Activated CD8-positive, alpha-beta T cell treated with anti-CD3 and anti-CD28 coated beads for 36 hours (primary cell): ENCODE measurements at regions of chr11 and their contacts with region 1.

Region 1: DNA sequence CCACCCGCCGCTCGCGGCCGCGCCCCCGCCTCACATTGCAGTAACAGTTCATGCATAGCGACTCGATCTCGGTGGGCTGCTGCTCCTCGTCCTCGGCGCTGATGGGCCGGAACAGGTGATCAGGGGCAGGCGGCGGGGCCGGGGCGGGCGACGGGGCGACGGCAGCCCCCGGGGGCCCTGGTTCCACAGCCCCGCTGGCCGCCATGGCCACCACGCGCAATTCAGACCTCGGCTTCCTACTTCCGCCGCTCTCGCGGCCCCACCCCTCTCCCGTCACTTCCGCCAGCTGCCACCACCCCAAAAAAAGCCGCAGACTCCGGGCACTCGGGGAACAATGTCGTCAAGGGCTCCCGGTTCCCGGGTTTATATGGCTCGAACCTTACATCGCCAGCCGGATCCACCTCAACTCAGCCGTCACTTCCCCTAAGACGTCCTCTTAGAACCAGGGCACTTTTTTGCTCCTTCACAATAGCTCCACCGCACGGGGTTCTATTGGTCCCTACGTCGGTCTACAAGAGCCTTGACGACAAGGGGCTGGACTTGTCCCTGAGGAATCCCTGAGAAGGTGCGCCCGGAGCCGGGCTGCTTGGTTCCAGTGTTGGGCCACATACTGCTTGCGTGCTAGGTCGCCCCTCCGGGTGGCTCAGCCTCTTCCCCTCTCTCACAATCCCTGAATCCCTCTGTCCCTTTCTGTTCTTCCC is at the start of gene ZPR1:
- DNase-seq: peak; percentile 87
- ATAC-seq: peak; percentile 77
- H3K4me3 Mint-ChIP-seq: peak within 1 kb of the TSS; percentile 83
- H3K27ac Mint-ChIP-seq: peak within 1 kb of the TSS; percentile 91
- H3K4me1 Mint-ChIP-seq: peaks cover 44% of the 10 kb centered on the region
- H3K27me3 Mint-ChIP-seq: no peaks in the 10 kb centered on the region
- CTCF ChIP-seq: no peak
- total RNA-seq, gene ZPR1: 89.9 TPM

Region 2: DNA sequence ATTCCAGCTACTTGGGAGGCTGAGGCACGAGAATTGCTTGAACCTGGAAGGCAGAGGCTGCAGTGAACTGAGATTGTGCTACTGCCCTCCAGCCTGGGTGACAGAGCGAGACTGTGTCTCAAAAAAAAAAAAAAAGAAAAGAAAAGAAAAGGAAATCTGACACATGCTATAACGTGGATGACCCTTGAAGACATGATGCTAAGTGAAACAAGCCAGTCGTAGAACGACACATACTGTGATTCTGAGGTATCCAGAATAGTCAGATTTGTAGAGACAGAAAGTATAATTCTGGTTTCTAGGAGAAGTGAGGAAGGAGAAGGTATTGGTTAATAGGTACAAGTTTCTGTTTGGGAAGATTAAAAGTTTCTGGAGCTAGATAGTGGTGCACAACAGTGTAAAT is 10.4 kb after region 1 on chr11:
- CTCF ChIA-PET with region 1: interaction called, 17 read pairs
- POLR2A ChIA-PET with region 1: interaction called, 3 read pairs
- intact Hi-C with region 1: no loop called
- DNase-seq: no peak
- ATAC-seq: no peak
- H3K4me3 Mint-ChIP-seq: no peak overlapping the region
- H3K27ac Mint-ChIP-seq: no peak overlapping the region
- H3K4me1 Mint-ChIP-seq: no peaks in the 10 kb centered on the region
- H3K27me3 Mint-ChIP-seq: peaks cover 5% of the 10 kb centered on the region
- CTCF ChIP-seq: no peak

Region 3: GRCh38 chr11:116813781-116814471 is 26.0 kb after region 1 on chr11:
- CTCF ChIA-PET with region 1: interaction called, 13 read pairs
- POLR2A ChIA-PET with region 1: no interaction called
- intact Hi-C with region 1: no loop called
- DNase-seq: no peak
- ATAC-seq: no peak
- H3K4me3 Mint-ChIP-seq: no peak overlapping the region
- H3K27ac Mint-ChIP-seq: no peak overlapping the region
- H3K4me1 Mint-ChIP-seq: no peaks in the 10 kb centered on the region
- H3K27me3 Mint-ChIP-seq: peaks cover 2% of the 10 kb centered on the region
- CTCF ChIP-seq: no peak

Region 4: GRCh38 chr11:116853461-116854073 is 65.6 kb after region 1 on chr11:
- CTCF ChIA-PET with region 1: interaction called, 29 read pairs
- POLR2A ChIA-PET with region 1: interaction called, 7 read pairs
- intact Hi-C with region 1: no loop called
- DNase-seq: peak; percentile 74
- ATAC-seq: peak; percentile 94
- H3K4me3 Mint-ChIP-seq: peak overlapping the region; percentile 23
- H3K27ac Mint-ChIP-seq: peak overlapping the region; percentile 87
- H3K4me1 Mint-ChIP-seq: peaks cover 58% of the 10 kb centered on the region
- H3K27me3 Mint-ChIP-seq: no peaks in the 10 kb centered on the region
- CTCF ChIP-seq: no peak

Region 5: DNA sequence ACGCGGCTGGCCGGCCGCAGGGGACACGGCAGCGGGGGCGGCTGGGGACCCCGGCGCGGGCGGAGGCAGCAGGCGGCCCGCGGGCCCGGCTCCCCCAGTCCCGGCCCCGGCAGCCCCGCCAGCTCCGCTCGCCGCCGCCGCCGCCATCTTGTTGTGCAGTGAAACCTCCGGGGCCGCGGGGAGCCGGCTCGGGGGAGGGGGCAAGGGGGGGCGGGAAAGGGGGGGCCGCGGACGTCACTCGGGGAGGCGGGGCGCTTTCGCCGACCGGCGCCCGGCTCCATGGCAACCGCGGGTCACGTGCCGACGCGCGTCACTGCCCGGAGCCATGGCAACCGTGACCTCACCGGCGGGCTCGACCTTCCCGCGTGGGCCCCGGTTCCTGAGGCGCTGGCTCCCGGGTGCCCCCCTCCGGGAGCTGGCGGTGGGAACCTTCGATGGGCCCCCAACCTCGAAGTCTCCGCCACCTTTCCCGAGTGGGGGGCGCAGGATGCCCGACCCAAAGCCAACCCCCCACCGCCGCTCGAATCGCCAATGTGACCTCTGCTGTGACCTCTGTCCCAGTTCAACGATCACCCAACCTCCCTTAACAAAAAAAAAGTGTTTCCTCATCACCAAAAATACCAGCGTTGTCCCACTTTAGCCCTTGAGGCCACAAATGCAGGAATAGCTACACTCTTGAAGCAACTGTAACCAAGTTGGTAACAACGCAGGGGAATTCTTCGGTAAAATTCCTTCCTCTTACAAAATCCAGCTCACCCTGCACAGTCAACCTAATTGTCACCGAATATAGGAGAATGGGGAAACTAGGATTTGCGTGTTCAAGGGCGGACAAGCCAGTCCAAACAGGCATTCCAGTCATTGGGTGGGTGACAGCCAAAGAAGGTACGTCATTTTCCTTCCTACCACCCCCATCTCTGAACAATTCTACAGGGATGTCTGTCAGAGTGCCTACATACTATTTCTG is 310.6 kb after region 1 on chr11 and contains the start of gene SIK3:
- CTCF ChIA-PET with region 1: interaction called, 26 read pairs
- POLR2A ChIA-PET with region 1: no interaction called
- intact Hi-C with region 1: no loop called
- DNase-seq: peak; percentile 92
- ATAC-seq: peak; percentile 76
- H3K4me3 Mint-ChIP-seq: peak within 1 kb of the TSS; percentile 98
- H3K27ac Mint-ChIP-seq: peak within 1 kb of the TSS; percentile 94
- H3K4me1 Mint-ChIP-seq: peaks cover 42% of the 10 kb centered on the region
- H3K27me3 Mint-ChIP-seq: no peaks in the 10 kb centered on the region
- CTCF ChIP-seq: peak; percentile 16
- total RNA-seq, gene SIK3: 18.7 to 24.1 TPM

Region 6: DNA sequence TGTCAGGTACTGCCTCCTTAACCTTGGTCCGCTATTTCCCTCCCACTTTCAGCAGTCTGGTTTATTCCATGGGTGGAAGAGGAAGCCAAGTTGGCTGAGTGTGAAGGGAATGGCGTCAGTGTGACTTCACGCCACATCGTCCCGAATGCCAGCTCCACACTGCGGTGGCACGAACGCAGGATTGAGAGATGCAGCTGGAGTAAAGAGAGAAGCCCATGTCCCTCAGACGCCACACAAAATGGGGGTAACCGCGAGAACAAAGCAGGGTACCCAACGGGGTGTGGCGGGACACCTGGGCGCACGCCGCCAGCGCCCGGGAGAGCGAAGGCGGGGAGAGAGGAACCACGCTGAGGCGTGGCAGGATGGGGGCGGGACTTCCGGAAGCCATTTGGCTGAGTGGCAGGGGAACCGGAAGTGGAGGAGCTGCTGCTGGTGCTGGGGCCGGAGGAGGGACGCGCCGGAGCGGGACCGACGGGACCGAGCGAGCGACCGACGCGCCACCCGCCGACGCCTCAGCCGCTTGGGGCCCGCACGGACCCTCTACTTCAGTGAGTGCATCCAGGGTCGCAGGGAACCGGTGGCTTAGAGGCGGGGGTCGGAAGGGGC is 356.0 kb after region 1 on chr11 and contains the start of gene PAFAH1B2:
- CTCF ChIA-PET with region 1: interaction called, 21 read pairs
- POLR2A ChIA-PET with region 1: interaction called, 6 read pairs
- intact Hi-C with region 1: no loop called
- DNase-seq: peak; percentile 97
- ATAC-seq: peak; percentile 94
- H3K4me3 Mint-ChIP-seq: peak within 1 kb of the TSS; percentile 99
- H3K27ac Mint-ChIP-seq: peak within 1 kb of the TSS; percentile 92
- H3K4me1 Mint-ChIP-seq: peaks cover 34% of the 10 kb centered on the region
- H3K27me3 Mint-ChIP-seq: peaks cover 8% of the 10 kb centered on the region
- CTCF ChIP-seq: no peak
- total RNA-seq, gene PAFAH1B2: 50.0 to 50.2 TPM